ENCODE measurements at regions of chr2 and their contacts with region 1.

Region 1: GRCh38 chr2:62897187-62897827 is 153.3 kb upstream of the OTX1 start:
- DNase-seq: no peak
- ATAC-seq: no peak
- H3K4me3 Mint-ChIP-seq: no peak overlapping the region
- H3K27ac Mint-ChIP-seq: no peak overlapping the region
- H3K4me1 Mint-ChIP-seq: no peaks in the 10 kb centered on the region
- H3K27me3 Mint-ChIP-seq: no peaks in the 10 kb centered on the region
- CTCF ChIP-seq: no peak

Region 2: DNA sequence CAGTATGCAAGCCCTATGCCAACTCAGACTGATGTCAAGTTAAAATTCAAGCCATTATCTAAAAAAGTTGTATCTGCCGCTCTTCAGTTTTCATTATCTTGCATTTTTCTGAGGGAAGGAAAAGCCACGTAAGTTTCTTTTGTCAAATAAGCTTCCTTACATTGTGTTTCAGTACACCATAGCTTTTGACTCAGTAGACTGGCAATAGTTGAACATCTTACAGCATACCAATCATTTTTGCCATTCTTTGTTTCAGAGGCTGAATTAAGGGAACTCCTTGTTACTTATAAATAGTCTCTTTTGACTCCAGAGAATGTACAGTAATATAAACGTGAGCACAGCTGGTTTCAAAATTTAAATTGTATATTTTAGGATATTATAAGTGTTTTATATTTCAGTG is 71.2 kb before region 1 on chr2:
- CTCF ChIA-PET with region 1: no interaction called
- POLR2A ChIA-PET with region 1: no interaction called
- DNase-seq: no peak
- ATAC-seq: no peak
- H3K4me3 Mint-ChIP-seq: no peak overlapping the region
- H3K27ac Mint-ChIP-seq: peak overlapping the region; percentile 41; the same call in 1 of the 2 replicates
- H3K4me1 Mint-ChIP-seq: peaks cover 19% of the 10 kb centered on the region
- H3K27me3 Mint-ChIP-seq: no peaks in the 10 kb centered on the region
- CTCF ChIP-seq: no peak

Region 3: DNA sequence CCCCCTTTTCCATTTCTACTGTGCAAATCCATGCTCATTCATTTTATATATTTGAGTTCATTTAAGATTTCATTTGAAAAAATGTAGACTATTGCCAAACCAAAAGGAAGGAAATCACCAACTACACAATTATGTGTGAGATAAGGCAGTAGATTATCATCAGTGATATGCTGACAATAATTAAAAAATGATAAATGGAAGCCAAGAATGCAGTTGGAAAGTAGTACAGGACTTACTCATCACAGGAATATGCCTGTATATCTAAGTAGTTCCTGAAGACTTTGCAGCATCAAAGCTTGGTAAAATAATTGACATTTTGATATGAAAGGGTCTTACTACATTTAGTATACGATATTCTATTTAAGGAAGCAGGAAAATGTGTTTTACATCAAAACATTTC is 12.8 kb before region 1 on chr2:
- CTCF ChIA-PET with region 1: no interaction called
- POLR2A ChIA-PET with region 1: interaction called, 11 read pairs
- DNase-seq: no peak
- ATAC-seq: no peak
- H3K4me3 Mint-ChIP-seq: no peak overlapping the region
- H3K27ac Mint-ChIP-seq: no peak overlapping the region
- H3K4me1 Mint-ChIP-seq: peaks cover 14% of the 10 kb centered on the region
- H3K27me3 Mint-ChIP-seq: no peaks in the 10 kb centered on the region
- CTCF ChIP-seq: no peak

Measured in WTC11 (cell line).